Vagina (tissue), 2 donors: ENCODE measurements at regions of chr2 and their contacts with region 1.

Region 1: GRCh38 chr2:26327291-26328272 is 18.4 kb upstream of the SELENOI start:
- DNase-seq: no peak
- H3K4me3 ChIP-seq: no peak overlapping the region
- H3K27ac ChIP-seq: no peak overlapping the region
- H3K4me1 ChIP-seq: no peaks in the 10 kb centered on the region
- H3K27me3 ChIP-seq: no peaks in the 10 kb centered on the region
- CTCF ChIP-seq: no peak
- POLR2A ChIP-seq: no peak

Region 2: GRCh38 chr2:25388491-25388890 is 939.1 kb before region 1 on chr2:
- intact Hi-C with region 1: loop called (anchors 5 kb)
- DNase-seq: peak in 1 of 2 donors; percentile 40
- H3K4me3 ChIP-seq: no peak overlapping the region
- H3K27ac ChIP-seq: no peak overlapping the region
- H3K4me1 ChIP-seq: no peaks in the 10 kb centered on the region
- H3K27me3 ChIP-seq: no peaks in the 10 kb centered on the region
- CTCF ChIP-seq: no peak
- POLR2A ChIP-seq: no peak

Region 3: GRCh38 chr2:26164231-26164630 is 163.4 kb before region 1 on chr2:
- intact Hi-C with region 1: no loop called
- DNase-seq: no peak
- H3K4me3 ChIP-seq: no peak overlapping the region
- H3K27ac ChIP-seq: no peak overlapping the region
- H3K4me1 ChIP-seq: no peaks in the 10 kb centered on the region
- H3K27me3 ChIP-seq: no peaks in the 10 kb centered on the region
- CTCF ChIP-seq: no peak
- POLR2A ChIP-seq: no peak